HepG2 (cell line): ENCODE measurements at regions of chr22 and their contacts with region 1.

Region 1: GRCh38 chr22:43385770-43386641 is 25.8 kb upstream of the MPPED1 start:
- DNase-seq: peak; percentile 48
- ATAC-seq: peak; percentile 86
- H3K4me3 ChIP-seq: no peak overlapping the region
- H3K27ac ChIP-seq: no peak overlapping the region
- H3K4me1 ChIP-seq: peaks cover 42% of the 10 kb centered on the region
- H3K27me3 ChIP-seq: no peaks in the 10 kb centered on the region
- CTCF ChIP-seq: peak; percentile 97
- EP300 ChIP-seq: no peak
- POLR2A ChIP-seq: no peak
- RAD21 ChIP-seq: peak; percentile 93

Region 2: DNA sequence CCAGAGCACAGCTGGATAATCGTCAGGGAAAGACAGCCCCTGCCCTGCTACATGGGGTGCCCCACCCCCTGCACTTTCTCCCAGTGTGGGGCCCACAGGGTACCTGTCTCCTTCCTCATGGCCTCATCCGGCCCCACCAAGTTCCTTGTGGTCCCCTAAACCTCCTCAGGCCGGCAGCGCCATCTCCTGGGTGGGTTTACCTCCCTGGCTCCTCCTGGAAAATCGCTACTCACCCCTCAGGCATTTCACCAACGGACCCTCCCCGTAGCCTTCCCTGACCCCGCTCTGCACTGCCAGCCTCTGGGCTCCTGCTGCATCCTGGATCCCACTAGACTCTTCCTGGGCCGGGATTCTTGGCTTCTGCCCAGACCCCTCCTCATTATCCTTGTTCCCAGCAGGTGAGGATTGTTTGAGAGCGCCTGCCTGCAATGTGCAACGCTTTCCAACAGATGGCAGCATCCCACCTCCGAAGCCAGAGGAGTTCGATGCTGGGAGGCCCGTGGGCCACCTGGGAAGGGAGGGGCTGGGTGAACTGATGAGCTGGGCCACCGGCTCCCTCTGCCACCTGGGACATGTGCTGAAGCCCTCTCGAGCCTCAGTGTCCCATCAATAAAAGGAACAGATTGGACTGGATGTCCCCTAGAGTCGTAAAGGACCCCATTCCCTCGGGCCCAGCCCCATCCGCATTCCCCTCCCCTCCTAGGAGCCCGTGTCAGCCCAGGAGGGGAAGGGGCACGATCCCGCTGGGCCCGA is 154.9 kb before region 1 on chr22:
- CTCF ChIA-PET with region 1: interaction called, 19 read pairs
- POLR2A ChIA-PET with region 1: no interaction called
- in situ Hi-C with region 1: no loop called
- intact Hi-C with region 1: loop called (anchors 5 kb)
- DNase-seq: peak; percentile 48
- ATAC-seq: peak; percentile 61
- H3K4me3 ChIP-seq: no peak overlapping the region
- H3K27ac ChIP-seq: no peak overlapping the region
- H3K4me1 ChIP-seq: peaks cover 40% of the 10 kb centered on the region
- H3K27me3 ChIP-seq: peaks cover 5 to 50% of the 10 kb centered on the region in 2 experiments
- CTCF ChIP-seq: peak; percentile 97
- EP300 ChIP-seq: no peak
- POLR2A ChIP-seq: no peak
- RAD21 ChIP-seq: peak; percentile 91

Region 3: DNA sequence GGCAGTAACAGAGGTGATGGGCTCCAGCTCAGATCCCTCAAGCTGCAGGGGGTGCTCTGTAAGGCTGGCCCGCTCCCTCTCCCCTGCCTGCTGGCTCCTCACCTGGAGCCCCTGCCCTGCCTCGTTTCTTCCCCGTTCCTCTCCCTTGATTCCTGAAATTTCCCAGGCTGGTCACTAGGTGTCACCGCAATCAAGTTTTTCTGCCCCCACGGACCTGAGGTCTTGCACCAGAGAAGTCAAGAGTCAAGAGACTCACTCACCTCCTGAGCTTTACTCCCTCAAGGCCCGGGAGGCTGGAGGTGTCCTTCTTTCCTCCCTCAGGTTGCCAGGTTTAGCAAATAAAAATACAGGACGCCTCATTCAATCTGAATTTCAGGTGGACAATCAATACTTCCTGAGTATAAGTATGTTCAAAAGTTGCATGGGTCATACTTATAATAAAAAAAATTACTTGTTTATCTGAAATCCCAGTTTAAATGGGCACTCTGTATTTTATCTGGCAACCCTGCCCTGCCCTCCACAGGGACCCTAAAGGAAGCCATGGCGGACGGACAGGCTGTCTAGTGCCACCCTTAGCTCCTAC is 112.0 kb before region 1 on chr22:
- CTCF ChIA-PET with region 1: interaction called, 36 read pairs
- POLR2A ChIA-PET with region 1: no interaction called
- in situ Hi-C with region 1: no loop called
- intact Hi-C with region 1: loop called (anchors 1 kb)
- DNase-seq: peak; percentile 47
- ATAC-seq: peak; percentile 58
- H3K4me3 ChIP-seq: no peak overlapping the region
- H3K27ac ChIP-seq: no peak overlapping the region
- H3K4me1 ChIP-seq: peaks cover 8% of the 10 kb centered on the region
- H3K27me3 ChIP-seq: peaks cover 11 to 46% of the 10 kb centered on the region in 2 experiments
- CTCF ChIP-seq: peak; percentile 89
- EP300 ChIP-seq: no peak
- POLR2A ChIP-seq: no peak
- RAD21 ChIP-seq: peak; percentile 73

Region 4: GRCh38 chr22:43346521-43346929 is 39.5 kb before region 1 on chr22:
- CTCF ChIA-PET with region 1: interaction called, 4 read pairs
- POLR2A ChIA-PET with region 1: no interaction called
- in situ Hi-C with region 1: no loop called
- intact Hi-C with region 1: loop called (anchors 1 kb)
- DNase-seq: peak; percentile 30
- ATAC-seq: peak; percentile 81
- H3K4me3 ChIP-seq: no peak overlapping the region
- H3K27ac ChIP-seq: no peak overlapping the region
- H3K4me1 ChIP-seq: peaks cover 26% of the 10 kb centered on the region
- H3K27me3 ChIP-seq: peaks cover 4 to 21% of the 10 kb centered on the region in 2 experiments
- CTCF ChIP-seq: peak; percentile 83
- EP300 ChIP-seq: no peak
- POLR2A ChIP-seq: no peak
- RAD21 ChIP-seq: peak; percentile 67; the same call in 1 of the 2 replicates

Region 5: DNA sequence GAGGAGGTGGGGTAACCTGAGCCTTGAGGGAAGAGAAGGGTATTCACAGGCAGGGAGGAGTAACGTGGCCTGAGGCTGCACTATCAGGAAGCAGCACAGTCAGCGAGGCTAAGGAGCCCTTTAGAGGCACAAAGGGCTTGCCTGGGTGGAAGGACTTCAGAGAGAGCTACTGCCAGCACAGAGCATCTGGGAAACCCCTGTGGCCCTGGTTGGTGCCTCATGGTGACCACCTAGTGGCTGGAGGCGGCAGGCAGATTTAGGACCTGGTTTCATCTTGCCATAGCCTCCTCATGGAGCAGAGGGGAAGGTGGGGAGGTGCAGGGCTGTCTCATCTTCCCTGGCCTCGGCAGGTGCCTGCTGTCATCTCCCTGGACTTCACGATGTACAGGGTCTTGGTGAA is 90.3 kb after region 1 on chr22:
- CTCF ChIA-PET with region 1: interaction called, 11 read pairs
- POLR2A ChIA-PET with region 1: no interaction called
- in situ Hi-C with region 1: loop called (anchors 5 kb)
- intact Hi-C with region 1: loop called (anchors 1 kb)
- DNase-seq: peak; percentile 22
- ATAC-seq: peak; percentile 71
- H3K4me3 ChIP-seq: no peak overlapping the region
- H3K27ac ChIP-seq: no peak overlapping the region
- H3K4me1 ChIP-seq: peaks cover 23% of the 10 kb centered on the region
- H3K27me3 ChIP-seq: no peaks in the 10 kb centered on the region; a peak in 2 of 5 replicates
- CTCF ChIP-seq: peak; percentile 66
- EP300 ChIP-seq: no peak
- POLR2A ChIP-seq: no peak
- RAD21 ChIP-seq: no peak

Region 6: DNA sequence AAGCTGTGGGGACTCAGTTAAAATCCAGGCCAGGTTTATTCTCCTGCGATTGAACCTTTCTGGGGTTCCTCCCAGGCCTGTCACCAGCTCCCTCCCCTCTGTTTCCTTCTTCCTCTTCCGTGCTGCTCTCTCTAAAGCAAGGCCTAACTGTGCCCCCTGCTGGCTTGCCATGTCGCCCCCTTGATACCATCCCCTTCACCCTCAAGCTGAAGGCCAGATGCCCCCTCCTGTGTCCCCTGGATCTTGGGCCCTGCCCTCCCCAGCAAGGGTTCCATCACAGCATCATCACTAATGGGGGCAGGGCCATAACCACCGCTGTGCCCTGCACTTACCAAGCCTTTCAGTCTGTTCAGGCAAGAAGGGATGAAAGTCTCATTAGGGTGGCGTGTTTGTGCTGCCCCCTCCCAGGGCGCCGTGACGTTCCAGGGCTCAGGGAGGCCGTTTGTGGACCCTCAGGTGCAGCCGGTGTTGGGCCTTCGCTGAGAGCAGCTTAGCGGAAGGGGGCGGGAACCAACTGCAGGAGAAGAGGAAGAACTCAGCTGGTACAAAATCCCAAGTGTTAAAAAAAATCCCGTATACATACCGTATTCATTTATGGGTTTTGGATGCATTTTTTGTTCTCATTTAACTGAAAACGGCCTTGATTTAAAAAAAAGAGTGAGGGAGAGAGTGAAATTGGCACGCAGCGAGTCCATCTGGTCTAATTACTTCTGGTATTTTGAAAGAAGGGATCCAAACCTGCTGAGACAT is 95.7 kb after region 1 on chr22:
- CTCF ChIA-PET with region 1: interaction called, 11 read pairs
- POLR2A ChIA-PET with region 1: no interaction called
- in situ Hi-C with region 1: loop called (anchors 5 kb)
- intact Hi-C with region 1: loop called (anchors 1 kb)
- DNase-seq: peak; percentile 18
- ATAC-seq: peak; percentile 46
- H3K4me3 ChIP-seq: no peak overlapping the region
- H3K27ac ChIP-seq: no peak overlapping the region
- H3K4me1 ChIP-seq: no peaks in the 10 kb centered on the region
- H3K27me3 ChIP-seq: peaks cover 0 to 6% of the 10 kb centered on the region in 2 experiments; a peak in 3 of 5 replicates
- CTCF ChIP-seq: peak; percentile 72
- EP300 ChIP-seq: no peak
- POLR2A ChIP-seq: no peak
- RAD21 ChIP-seq: no peak

Region 7: GRCh38 chr22:43537014-43537585 is 151.1 kb after region 1 on chr22:
- CTCF ChIA-PET with region 1: interaction called, 11 read pairs
- POLR2A ChIA-PET with region 1: no interaction called
- in situ Hi-C with region 1: no loop called
- intact Hi-C with region 1: loop called (anchors 5 kb)
- DNase-seq: peak; percentile 22
- ATAC-seq: peak; percentile 95
- H3K4me3 ChIP-seq: no peak overlapping the region
- H3K27ac ChIP-seq: no peak overlapping the region
- H3K4me1 ChIP-seq: no peaks in the 10 kb centered on the region
- H3K27me3 ChIP-seq: peaks cover 6 to 32% of the 10 kb centered on the region in 2 experiments; a peak in 2 of 5 replicates
- CTCF ChIP-seq: peak; percentile 62
- EP300 ChIP-seq: no peak
- POLR2A ChIP-seq: no peak
- RAD21 ChIP-seq: no peak